SK-N-SH (cell line): ENCODE measurements at regions of chr11 and their contacts with region 1.

Region 1: DNA sequence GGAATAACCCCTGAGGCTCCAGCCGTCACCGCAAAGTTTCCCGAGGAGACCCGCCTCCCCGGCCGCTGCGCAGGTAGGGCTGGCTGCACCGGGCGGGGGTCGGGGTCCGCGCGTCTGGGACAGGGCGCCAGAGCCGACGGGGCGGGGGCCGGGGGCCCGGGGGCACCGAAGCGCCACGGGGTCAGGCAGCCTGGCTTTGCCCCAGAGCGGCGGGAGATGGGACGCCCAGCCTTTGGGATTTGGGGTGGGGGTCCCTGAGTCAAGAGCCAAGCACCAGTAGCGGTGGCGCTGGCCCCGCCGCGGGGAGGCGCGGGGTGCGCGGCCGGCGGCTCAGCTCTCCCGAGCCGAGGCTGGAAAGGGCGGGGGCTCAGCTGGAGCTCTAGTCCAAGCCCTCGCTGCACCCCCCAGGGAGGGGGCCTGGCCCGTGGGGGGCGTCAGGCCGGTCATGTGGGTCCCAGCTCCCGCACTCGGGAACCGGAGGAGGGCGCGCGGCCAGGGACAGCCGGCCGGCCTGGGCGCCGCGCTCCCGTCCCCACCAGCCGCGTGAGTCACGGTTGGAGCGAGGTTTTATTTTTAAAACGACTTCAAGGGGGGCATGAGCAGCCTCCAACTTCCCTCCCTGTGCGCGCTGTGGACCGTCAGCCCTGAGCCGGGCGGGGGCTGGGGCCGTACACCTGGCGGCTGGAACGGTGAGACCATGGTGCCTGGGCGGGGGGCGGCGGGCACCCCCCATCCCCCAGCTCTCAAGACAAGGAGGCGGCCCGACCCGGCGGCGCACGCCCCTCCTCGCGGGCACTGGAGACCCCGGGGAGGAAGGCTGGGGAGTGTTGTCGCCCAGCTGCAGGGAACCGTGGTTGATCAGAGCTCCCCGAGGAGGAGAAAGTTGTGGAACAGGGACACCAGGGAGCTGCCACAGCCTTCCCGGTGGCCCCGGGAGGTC is 626 bp downstream of the FLRT1 start:
- DNase-seq: peak; percentile 73
- H3K4me3 ChIP-seq: peak overlapping the region; percentile 58 to 62
- H3K27ac ChIP-seq: peak overlapping the region in 1 of 2 experiments; percentile 84; a peak in 2 of 4 replicates
- H3K4me1 ChIP-seq: peaks cover 3 to 59% of the 10 kb centered on the region in 2 experiments; a peak in 2 of 4 replicates
- H3K27me3 ChIP-seq: no peaks in the 10 kb centered on the region
- CTCF ChIP-seq: peak; percentile 29; the same call in 1 of the 2 replicates
- EP300 ChIP-seq: no peak
- RAD21 ChIP-seq: peak; percentile 9; the same call in 1 of the 2 replicates

Region 2: GRCh38 chr11:64094463-64095260 is 58.3 kb after region 1 on chr11:
- CTCF ChIA-PET with region 1: interaction called, 10 read pairs
- POLR2A ChIA-PET with region 1: interaction called, 3 read pairs
- DNase-seq: no peak
- H3K4me3 ChIP-seq: no peak overlapping the region
- H3K27ac ChIP-seq: peak overlapping the region; percentile 36 to 96
- H3K4me1 ChIP-seq: peaks cover 12 to 85% of the 10 kb centered on the region in 2 experiments; a peak in 2 of 4 replicates
- H3K27me3 ChIP-seq: no peaks in the 10 kb centered on the region
- CTCF ChIP-seq: peak; percentile 20; the same call in 1 of the 2 replicates
- EP300 ChIP-seq: no peak
- RAD21 ChIP-seq: no peak

Region 3: DNA sequence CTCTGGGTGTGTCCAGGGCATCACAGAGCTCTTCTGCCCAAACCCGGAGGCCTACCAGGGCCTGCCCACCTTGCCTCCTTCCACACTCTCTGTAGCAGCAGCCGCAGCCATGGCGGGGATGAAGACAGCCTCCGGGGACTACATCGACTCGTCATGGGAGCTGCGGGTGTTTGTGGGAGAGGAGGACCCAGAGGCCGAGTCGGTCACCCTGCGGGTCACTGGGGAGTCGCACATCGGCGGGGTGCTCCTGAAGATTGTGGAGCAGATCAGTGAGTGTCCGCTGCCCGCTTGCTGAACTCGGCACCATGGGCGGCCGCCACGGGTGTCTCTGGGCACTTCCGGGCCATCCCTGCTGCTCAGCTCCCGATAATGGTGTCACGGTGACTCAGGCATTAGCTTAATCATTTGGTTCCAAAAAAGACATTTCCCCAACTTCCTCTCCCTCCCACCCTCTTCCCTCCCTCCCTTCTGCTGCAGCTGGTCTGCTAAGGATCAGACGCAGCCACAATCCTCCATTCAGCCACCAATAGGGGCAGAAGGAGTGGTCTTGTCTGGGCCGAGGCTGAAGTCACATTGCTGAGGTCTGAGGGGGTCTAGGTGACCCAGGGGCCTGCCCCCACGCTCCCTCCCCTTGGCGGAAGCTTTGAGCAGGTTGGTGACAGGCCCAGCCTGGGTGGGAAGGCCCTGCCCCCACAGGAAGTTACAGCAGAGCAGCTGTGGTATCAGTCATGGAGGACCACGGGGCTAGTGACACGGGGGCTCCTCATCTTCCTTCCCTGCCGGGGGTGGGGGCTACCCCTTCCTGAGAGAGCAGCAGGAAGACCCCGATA is 171.1 kb after region 1 on chr11:
- CTCF ChIA-PET with region 1: no interaction called
- POLR2A ChIA-PET with region 1: no interaction called
- DNase-seq: peak; percentile 41
- H3K4me3 ChIP-seq: no peak overlapping the region
- H3K27ac ChIP-seq: peak overlapping the region in 1 of 2 experiments; percentile 48; a peak in 3 of 4 replicates
- H3K4me1 ChIP-seq: peaks cover 4 to 27% of the 10 kb centered on the region in 2 experiments; a peak in 3 of 4 replicates
- H3K27me3 ChIP-seq: no peaks in the 10 kb centered on the region
- CTCF ChIP-seq: no peak
- EP300 ChIP-seq: no peak
- RAD21 ChIP-seq: no peak

Region 4: DNA sequence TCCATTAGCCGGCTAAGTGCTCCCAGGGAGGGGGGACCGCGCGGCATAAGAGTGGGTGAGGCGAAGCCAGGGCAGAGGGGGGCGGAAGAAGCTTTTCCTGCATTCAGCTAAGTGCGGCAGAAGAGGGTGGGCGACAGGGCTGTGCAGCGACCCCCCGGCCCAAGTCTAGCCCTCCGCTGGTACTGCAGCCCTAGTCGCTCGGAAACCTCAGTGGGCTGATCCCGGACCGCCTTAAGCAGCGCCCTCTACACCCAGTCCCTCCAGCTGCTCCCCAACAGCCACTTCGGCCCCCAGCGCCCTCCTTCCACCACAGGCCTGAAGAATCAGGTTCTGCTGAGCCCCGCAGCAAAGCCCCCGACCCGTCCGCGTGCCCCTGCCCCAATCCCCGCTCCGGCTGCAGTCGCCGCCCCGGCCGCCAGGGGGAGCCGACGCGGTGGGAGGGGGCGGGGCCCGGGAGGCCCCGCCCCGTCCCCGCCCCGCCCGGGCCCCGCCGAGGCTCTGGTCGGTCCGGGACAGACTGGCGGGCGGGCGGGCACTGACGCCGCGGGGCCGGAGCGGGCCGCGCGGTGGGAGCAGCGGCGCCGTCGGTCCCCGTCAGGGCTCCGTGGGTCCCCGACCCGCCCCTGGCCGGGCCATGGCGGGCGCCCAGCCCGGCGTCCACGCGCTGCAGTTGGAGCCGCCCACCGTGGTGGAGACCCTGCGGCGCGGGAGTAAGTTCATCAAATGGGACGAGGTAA is 214.8 kb after region 1 on chr11 and contains the start of gene PLCB3:
- CTCF ChIA-PET with region 1: no interaction called
- POLR2A ChIA-PET with region 1: no interaction called
- DNase-seq: peak; percentile 96
- H3K4me3 ChIP-seq: peak within 1 kb of the TSS; percentile 88 to 90
- H3K27ac ChIP-seq: peak within 1 kb of the TSS; percentile 32 to 81
- H3K4me1 ChIP-seq: peaks cover 10 to 32% of the 10 kb centered on the region in 2 experiments; a peak in 2 of 4 replicates
- H3K27me3 ChIP-seq: no peaks in the 10 kb centered on the region
- CTCF ChIP-seq: peak; percentile 68
- EP300 ChIP-seq: no peak
- RAD21 ChIP-seq: no peak
- polyA plus RNA-seq, gene PLCB3: 26.8 and 30.4 TPM in 2 replicates

Region 5: DNA sequence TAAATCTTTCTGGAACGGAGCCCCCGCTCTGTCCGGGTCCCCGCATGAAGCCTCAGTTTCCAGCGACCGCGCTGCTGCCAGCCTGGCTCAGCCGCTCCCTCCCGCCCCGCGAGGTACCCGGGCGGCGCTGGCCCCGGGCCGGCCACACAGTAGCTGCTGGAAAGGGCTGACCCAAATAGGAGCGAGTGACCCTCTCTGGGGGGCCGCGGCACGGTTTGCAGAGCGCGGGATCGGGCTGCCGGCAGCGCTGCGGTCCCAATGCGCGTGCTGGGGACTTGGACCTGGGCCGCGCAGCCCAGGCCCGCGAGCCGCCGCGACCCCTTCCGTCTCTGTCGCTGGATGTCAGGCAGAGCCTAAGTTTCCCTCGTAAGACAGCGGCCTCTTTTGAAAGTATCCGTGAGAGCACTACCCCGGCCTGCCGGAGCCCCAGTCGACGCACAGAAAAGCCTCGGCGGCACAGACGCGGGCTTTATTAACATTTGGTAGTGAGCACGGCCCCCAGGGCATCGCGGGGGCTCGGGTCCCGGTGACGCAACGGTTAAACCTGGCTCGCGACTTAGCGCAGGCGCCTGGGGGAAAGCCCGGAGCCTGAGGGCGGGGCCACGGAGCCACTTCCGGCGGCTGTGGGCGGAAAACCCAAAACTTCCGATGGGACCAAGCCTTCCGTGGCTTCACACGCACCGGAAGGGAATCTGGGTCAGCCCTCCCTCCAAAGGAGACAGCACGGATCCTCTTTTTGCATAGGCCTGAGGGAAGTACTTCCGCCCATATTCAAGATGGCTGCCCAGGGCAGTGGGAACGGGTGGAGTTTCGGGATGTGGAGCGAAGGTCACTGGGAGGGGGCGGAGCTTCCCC is 233.2 kb after region 1 on chr11:
- CTCF ChIA-PET with region 1: no interaction called
- POLR2A ChIA-PET with region 1: no interaction called
- DNase-seq: peak; percentile 86
- H3K4me3 ChIP-seq: peak overlapping the region; percentile 60 to 76
- H3K27ac ChIP-seq: peak overlapping the region; percentile 97 to 99
- H3K4me1 ChIP-seq: peaks cover 12 to 42% of the 10 kb centered on the region in 2 experiments; a peak in 2 of 4 replicates
- H3K27me3 ChIP-seq: no peaks in the 10 kb centered on the region
- CTCF ChIP-seq: 0 out of 2 replicates have a peak, but pooled peaks have one; percentile 14
- EP300 ChIP-seq: no peak; a peak in 1 of 4 replicates
- RAD21 ChIP-seq: peak; percentile 44